ENCODE measurements at regions of chrX and their contacts with region 1.

Region 1: GRCh38 chrX:18855919-18856644 is 127.8 kb downstream of the PHKA2 start:
- DNase-seq: peak in 1 of 35 experiments; percentile 13
- ATAC-seq: peak in 1 of 4 experiments; percentile 36
- H3K4me3 ChIP-seq: no peak overlapping the region
- H3K4me3 Mint-ChIP-seq: peak overlapping the region in 1 of 3 donors; percentile 22
- H3K27ac ChIP-seq: no peak overlapping the region
- H3K27ac Mint-ChIP-seq: peak overlapping the region in 1 of 2 donors; percentile 2
- H3K4me1 ChIP-seq: peaks cover 11 to 27% of the 10 kb centered on the region in 2 experiments
- H3K4me1 Mint-ChIP-seq: peaks cover 28 to 41% (median 34%) of the 10 kb centered on the region in 3 donors
- H3K27me3 ChIP-seq: no peaks in the 10 kb centered on the region
- H3K27me3 Mint-ChIP-seq: no peaks in the 10 kb centered on the region

Region 2: GRCh38 chrX:18733287-18733686 is 122.8 kb before region 1 on chrX:
- CTCF ChIA-PET with region 1: no interaction called
- POLR2A ChIA-PET with region 1: no interaction called
- DNase-seq: no peak
- ATAC-seq: no peak
- H3K4me3 ChIP-seq: no peak overlapping the region
- H3K4me3 Mint-ChIP-seq: no peak overlapping the region
- H3K27ac ChIP-seq: no peak overlapping the region
- H3K27ac Mint-ChIP-seq: no peak overlapping the region
- H3K4me1 ChIP-seq: no peaks in the 10 kb centered on the region
- H3K4me1 Mint-ChIP-seq: no peaks in the 10 kb centered on the region
- H3K27me3 ChIP-seq: no peaks in the 10 kb centered on the region
- H3K27me3 Mint-ChIP-seq: no peaks in the 10 kb centered on the region

Region 3: GRCh38 chrX:18873189-18873791 is 17.2 kb after region 1 on chrX:
- CTCF ChIA-PET with region 1: no interaction called
- POLR2A ChIA-PET with region 1: interaction called in 1 of 2 experiments, 11 read pairs
- DNase-seq: no peak
- ATAC-seq: no peak
- H3K4me3 ChIP-seq: no peak overlapping the region
- H3K4me3 Mint-ChIP-seq: no peak overlapping the region
- H3K27ac ChIP-seq: no peak overlapping the region
- H3K27ac Mint-ChIP-seq: no peak overlapping the region
- H3K4me1 ChIP-seq: peaks cover 0 to 4% of the 10 kb centered on the region in 2 experiments
- H3K4me1 Mint-ChIP-seq: no peaks in the 10 kb centered on the region
- H3K27me3 ChIP-seq: peaks cover 0 to 12% of the 10 kb centered on the region in 2 experiments
- H3K27me3 Mint-ChIP-seq: peaks cover 4 to 9% of the 10 kb centered on the region in 2 donors

Region 4: DNA sequence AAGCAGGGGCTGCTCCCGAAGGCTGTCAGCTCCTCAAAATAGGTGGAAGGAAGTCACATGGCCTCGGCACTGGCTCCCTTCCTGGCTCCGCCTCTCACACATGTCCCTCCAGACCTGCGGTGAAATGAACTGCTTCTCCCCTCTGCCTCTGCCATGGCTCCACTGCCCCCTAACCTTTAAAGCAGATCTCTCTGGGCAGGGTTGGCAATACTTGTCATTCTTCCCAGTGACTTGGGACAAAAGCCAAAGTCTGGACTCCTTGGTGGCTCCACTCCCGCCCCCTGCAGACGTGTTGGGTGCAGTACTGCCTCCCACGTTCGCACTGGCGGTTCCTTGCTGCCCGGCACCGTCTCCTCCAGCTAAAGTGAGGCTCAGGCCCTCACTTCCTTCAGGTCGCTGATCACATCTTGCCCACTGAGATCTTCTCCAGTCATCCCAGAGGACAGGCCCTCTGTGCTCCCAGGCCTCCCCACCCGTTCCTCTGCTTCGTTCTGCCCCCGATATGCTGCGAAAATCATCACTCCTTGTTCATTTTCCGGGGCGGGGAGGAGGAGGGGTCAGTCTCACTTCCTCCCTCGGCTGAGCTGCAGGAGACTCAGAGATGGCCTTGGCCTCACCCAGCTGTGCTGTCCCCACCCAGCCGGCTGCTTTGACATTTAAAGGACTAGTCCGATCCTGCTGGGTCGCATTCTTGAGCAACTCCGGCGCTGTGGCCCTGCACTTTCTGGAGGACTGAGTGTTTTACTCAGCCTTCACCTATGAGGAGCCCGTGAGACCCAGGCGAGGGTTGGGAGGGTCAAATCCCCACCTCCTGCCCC is 30.5 kb after region 1 on chrX:
- CTCF ChIA-PET with region 1: no interaction called
- POLR2A ChIA-PET with region 1: no interaction called
- DNase-seq: peak in 27 of 35 experiments; percentile 12 to 63 (median 27)
- ATAC-seq: peak; percentile 65 to 73 (median 70)
- H3K4me3 ChIP-seq: peak overlapping the region; percentile 54 to 58
- H3K4me3 Mint-ChIP-seq: peak overlapping the region; percentile 81 to 85 (median 84)
- H3K27ac ChIP-seq: peak overlapping the region; percentile 74
- H3K27ac Mint-ChIP-seq: peak overlapping the region; percentile 92 to 95
- H3K4me1 ChIP-seq: peaks cover 2 to 33% of the 10 kb centered on the region in 2 experiments
- H3K4me1 Mint-ChIP-seq: peaks cover 27 to 37% (median 32%) of the 10 kb centered on the region in 3 donors
- H3K27me3 ChIP-seq: peaks cover 0 to 4% of the 10 kb centered on the region in 2 experiments
- H3K27me3 Mint-ChIP-seq: no peaks in the 10 kb centered on the region

Region 5: DNA sequence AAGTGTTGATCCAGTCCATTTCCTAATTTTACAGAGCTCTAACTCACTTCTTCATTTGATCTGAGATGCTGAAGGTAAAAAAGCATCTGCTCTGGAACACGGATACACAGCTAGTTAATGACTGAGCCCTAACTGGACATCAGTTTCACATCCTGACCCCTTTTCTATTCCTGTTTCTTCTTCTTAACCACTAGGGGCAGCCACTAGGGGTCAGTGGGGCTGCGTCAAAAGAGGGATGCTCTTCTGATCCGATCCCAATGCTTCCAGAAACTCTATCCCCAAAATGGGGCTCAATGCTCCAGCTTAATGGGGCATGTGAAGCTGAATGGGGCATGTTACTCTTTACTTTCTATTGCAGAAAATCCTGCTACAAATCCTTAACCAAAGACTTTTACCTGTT is 161.2 kb after region 1 on chrX:
- CTCF ChIA-PET with region 1: no interaction called
- POLR2A ChIA-PET with region 1: no interaction called
- DNase-seq: no peak
- ATAC-seq: no peak
- H3K4me3 ChIP-seq: no peak overlapping the region
- H3K4me3 Mint-ChIP-seq: no peak overlapping the region
- H3K27ac ChIP-seq: no peak overlapping the region
- H3K27ac Mint-ChIP-seq: no peak overlapping the region
- H3K4me1 ChIP-seq: no peaks in the 10 kb centered on the region
- H3K4me1 Mint-ChIP-seq: no peaks in the 10 kb centered on the region
- H3K27me3 ChIP-seq: no peaks in the 10 kb centered on the region
- H3K27me3 Mint-ChIP-seq: peaks cover 0 to 3% of the 10 kb centered on the region in 2 donors

Measured in T-cell (primary cell).